Heart left ventricle (tissue), 16 donors: ENCODE measurements at regions of chr10 and their contacts with region 1.

Region 1: GRCh38 chr10:119401671-119402395 is 140.7 kb downstream of the RGS10 start:
- DNase-seq: peak; percentile 71 to 85 (median 75)
- ATAC-seq: peak; percentile 71 to 93 (median 89)
- H3K4me3 ChIP-seq: no peak overlapping the region
- H3K27ac ChIP-seq: peak overlapping the region in 11 of 12 donors; percentile 64 to 87 (median 73)
- H3K4me1 ChIP-seq: peaks cover 2 to 67% (median 36%) of the 10 kb centered on the region in 12 donors
- H3K27me3 ChIP-seq: no peaks in the 10 kb centered on the region
- CTCF ChIP-seq: no peak
- POLR2A ChIP-seq: peak in 1 of 2 donors; percentile 14

Region 2: DNA sequence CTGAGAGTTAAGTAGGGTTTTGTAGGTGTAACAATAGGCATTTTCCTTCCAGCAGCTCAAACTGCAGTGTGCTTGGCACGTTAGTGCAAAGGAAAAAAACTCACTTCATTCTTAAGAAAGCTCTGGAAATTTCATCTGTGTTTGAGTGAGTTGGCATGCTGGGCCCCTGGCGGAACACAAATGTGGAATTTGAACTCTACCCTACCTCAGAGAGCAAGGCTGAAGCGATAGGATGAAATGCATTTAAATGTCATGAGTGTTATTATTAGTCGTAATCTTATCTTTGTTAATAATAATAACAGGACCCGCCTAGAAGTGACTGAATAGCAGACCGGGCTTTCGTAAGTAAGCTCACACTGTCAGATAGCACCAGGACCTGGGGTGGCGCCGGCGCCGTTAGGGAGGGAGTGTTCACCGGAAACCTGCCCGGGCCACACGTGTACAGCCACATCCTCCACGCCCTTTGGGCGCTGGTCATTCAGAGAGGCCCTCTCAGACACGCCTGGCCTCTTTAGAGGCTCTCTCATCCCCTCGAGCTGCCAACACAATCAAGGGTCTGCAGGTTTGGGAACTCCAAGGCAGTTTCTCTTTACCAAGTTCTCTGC is 131.0 kb before region 1 on chr10:
- intact Hi-C with region 1: loop called in 1 of 10 experiments (anchors 10 kb)
- DNase-seq: peak; percentile 88 to 95 (median 90)
- ATAC-seq: peak; percentile 89 to 95 (median 90)
- H3K4me3 ChIP-seq: peak overlapping the region in 7 of 12 donors; percentile 5 to 25 (median 19)
- H3K27ac ChIP-seq: peak overlapping the region; percentile 28 to 86 (median 78)
- H3K4me1 ChIP-seq: peaks cover 23 to 96% (median 71%) of the 10 kb centered on the region in 12 donors
- H3K27me3 ChIP-seq: no peaks in the 10 kb centered on the region
- CTCF ChIP-seq: peak in 1 of 12 donors; percentile 7
- POLR2A ChIP-seq: no peak

Region 3: GRCh38 chr10:119725828-119726675 is 324.2 kb after region 1 on chr10 and contains the start of gene INPP5F:
- intact Hi-C with region 1: no loop called
- DNase-seq: peak; percentile 99 to 100 (median 100)
- ATAC-seq: peak; percentile 99 to 100 (median 99)
- H3K4me3 ChIP-seq: peak within 1 kb of the TSS; percentile 67 to 98 (median 82)
- H3K27ac ChIP-seq: peak within 1 kb of the TSS; percentile 51 to 99 (median 95)
- H3K4me1 ChIP-seq: peaks cover 0 to 39% (median 23%) of the 10 kb centered on the region in 12 donors
- H3K27me3 ChIP-seq: no peaks in the 10 kb centered on the region
- CTCF ChIP-seq: peak in 10 of 12 donors; percentile 26 to 58 (median 35)
- POLR2A ChIP-seq: peak in 1 of 2 donors; percentile 57
- total RNA-seq, gene INPP5F: 3.9 to 9.9 (median 6.6) TPM